GM12878 (cell line): ENCODE measurements at regions of chr9 and their contacts with region 1.

Region 1: GRCh38 chr9:29796291-29796952 is 2223.1 kb upstream of the C9orf72 start:
- DNase-seq: peak; percentile 19
- ATAC-seq: peak; percentile 86
- H3K4me3 ChIP-seq: no peak overlapping the region
- H3K27ac ChIP-seq: no peak overlapping the region
- H3K4me1 ChIP-seq: no peaks in the 10 kb centered on the region
- H3K27me3 ChIP-seq: no peaks in the 10 kb centered on the region
- CTCF ChIP-seq: no peak
- EP300 ChIP-seq: peak; percentile 29 to 85; a peak in 3 of 4 replicates
- POLR2A ChIP-seq: no peak
- RAD21 ChIP-seq: no peak

Region 2: GRCh38 chr9:29730163-29730562 is 66.3 kb before region 1 on chr9:
- CTCF ChIA-PET with region 1: no interaction called
- POLR2A ChIA-PET with region 1: no interaction called
- RAD21 ChIA-PET with region 1: no interaction called
- SMC1A ChIA-PET with region 1: no interaction called
- in situ Hi-C with region 1: no loop called
- intact Hi-C with region 1: no loop called
- DNase-seq: no peak
- ATAC-seq: no peak
- H3K4me3 ChIP-seq: no peak overlapping the region
- H3K27ac ChIP-seq: no peak overlapping the region
- H3K4me1 ChIP-seq: no peaks in the 10 kb centered on the region
- H3K27me3 ChIP-seq: no peaks in the 10 kb centered on the region
- CTCF ChIP-seq: no peak
- EP300 ChIP-seq: no peak
- POLR2A ChIP-seq: no peak
- RAD21 ChIP-seq: no peak

Region 3: DNA sequence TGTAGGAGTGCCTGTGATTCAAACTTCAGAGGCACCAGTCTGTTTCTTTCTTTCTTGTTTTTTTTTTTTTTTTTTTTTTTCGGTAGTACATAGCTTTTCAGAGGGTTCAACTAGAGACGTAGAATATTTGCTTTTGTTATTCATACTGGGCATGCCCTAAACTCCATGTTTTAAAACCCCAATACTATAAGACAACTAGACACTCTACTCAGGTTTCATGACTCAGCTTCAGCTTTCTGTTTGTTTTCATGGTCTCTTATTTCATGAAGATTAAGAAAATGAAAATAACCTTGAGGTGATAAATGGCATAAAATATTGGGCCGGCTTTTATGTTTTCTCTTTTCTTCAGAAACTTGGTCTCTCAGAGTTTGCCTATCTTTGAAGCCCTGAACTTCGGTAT is 461.7 kb after region 1 on chr9:
- CTCF ChIA-PET with region 1: no interaction called
- POLR2A ChIA-PET with region 1: interaction called, 13 read pairs
- RAD21 ChIA-PET with region 1: no interaction called
- SMC1A ChIA-PET with region 1: no interaction called
- in situ Hi-C with region 1: no loop called
- intact Hi-C with region 1: no loop called
- DNase-seq: no peak
- ATAC-seq: no peak
- H3K4me3 ChIP-seq: no peak overlapping the region
- H3K27ac ChIP-seq: no peak overlapping the region
- H3K4me1 ChIP-seq: no peaks in the 10 kb centered on the region
- H3K27me3 ChIP-seq: no peaks in the 10 kb centered on the region
- CTCF ChIP-seq: no peak
- EP300 ChIP-seq: no peak
- POLR2A ChIP-seq: no peak
- RAD21 ChIP-seq: no peak